ENCODE measurements at regions of chr19 and their contacts with region 1.

Region 1: DNA sequence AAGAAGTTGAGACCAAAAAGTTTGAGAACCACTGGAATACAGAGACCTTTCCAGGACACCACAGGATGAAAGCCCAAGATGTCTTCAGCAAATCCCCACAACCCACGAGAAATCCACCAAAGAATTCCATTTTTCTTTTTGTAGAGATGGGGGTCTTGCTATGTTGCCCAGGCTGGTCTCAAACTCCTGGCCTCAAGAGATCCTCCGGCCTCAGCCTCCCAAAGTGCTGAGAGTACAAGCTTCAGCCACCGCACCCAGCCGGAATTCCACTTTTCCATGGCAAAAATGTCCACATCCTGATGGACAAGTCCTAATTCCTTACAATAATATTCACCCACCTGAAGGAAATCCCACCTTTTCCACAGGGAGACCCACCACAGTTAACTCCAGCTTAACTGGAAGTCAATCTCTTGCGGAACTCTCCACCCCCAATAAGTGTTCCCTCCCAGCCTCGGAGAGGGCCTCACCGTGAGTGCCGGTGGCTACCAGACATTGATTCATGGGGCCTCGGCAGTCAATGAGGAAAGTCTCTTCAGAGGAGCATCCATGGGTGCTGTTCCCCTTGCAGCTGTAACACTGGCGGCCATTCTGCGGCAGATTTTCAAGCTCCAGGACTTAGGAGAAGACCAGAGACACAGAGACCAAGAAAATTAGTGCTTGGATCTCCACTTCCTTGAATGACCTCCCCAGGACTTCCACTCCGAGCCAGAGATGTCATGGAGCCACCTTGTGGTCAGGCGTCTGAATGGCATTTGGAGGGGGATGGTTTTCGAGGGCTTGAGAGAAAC is 12.3 kb upstream of the CADM4 start:
- DNase-seq: peak; percentile 66 to 87
- H3K4me3 ChIP-seq: peak overlapping the region in 2 of 4 donors; percentile 8 to 15
- H3K27ac ChIP-seq: peak overlapping the region in 2 of 5 donors; percentile 25 to 33
- H3K4me1 ChIP-seq: peaks cover 0 to 4% (median 1%) of the 10 kb centered on the region in 4 donors
- H3K27me3 ChIP-seq: no peaks in the 10 kb centered on the region
- CTCF ChIP-seq: peak in 5 of 7 experiments; percentile 56 to 83 (median 71)
- EP300 ChIP-seq: no peak
- POLR2A ChIP-seq: no peak

Region 2: GRCh38 chr19:43555185-43555770 is 96.7 kb before region 1 on chr19:
- intact Hi-C with region 1: loop called (anchors 10 kb)
- DNase-seq: peak; percentile 78 to 91
- H3K4me3 ChIP-seq: no peak overlapping the region
- H3K27ac ChIP-seq: no peak overlapping the region
- H3K4me1 ChIP-seq: no peaks in the 10 kb centered on the region
- H3K27me3 ChIP-seq: no peaks in the 10 kb centered on the region
- CTCF ChIP-seq: peak in 5 of 7 experiments; percentile 14 to 63 (median 53)
- EP300 ChIP-seq: no peak
- POLR2A ChIP-seq: no peak

Region 3: GRCh38 chr19:43997631-43998290 is 345.8 kb after region 1 on chr19:
- intact Hi-C with region 1: no loop called
- DNase-seq: no peak
- H3K4me3 ChIP-seq: no peak overlapping the region
- H3K27ac ChIP-seq: no peak overlapping the region
- H3K4me1 ChIP-seq: peaks cover 0 to 8% (median 5%) of the 10 kb centered on the region in 4 donors
- H3K27me3 ChIP-seq: no peaks in the 10 kb centered on the region
- CTCF ChIP-seq: no peak
- EP300 ChIP-seq: no peak
- POLR2A ChIP-seq: no peak

Measured in stomach (tissue), 19 donors.